AG04450 (cell line): ENCODE measurements at regions of chr5 and their contacts with region 1.

Region 1: GRCh38 chr5:169571355-169571754 is 12.2 kb upstream of the SPDL1 start:
- DNase-seq: no peak
- H3K4me3 ChIP-seq: no peak overlapping the region
- H3K27ac ChIP-seq: no peak overlapping the region
- H3K27me3 ChIP-seq: peaks cover 9% of the 10 kb centered on the region
- CTCF ChIP-seq: no peak

Region 2: GRCh38 chr5:169583424-169584204 is 12.3 kb after region 1 on chr5 and contains the start of gene SPDL1:
- CTCF ChIA-PET with region 1: interaction called, 10 read pairs
- POLR2A ChIA-PET with region 1: interaction called, 3 read pairs
- DNase-seq: peak; percentile 93
- H3K4me3 ChIP-seq: peak within 1 kb of the TSS; percentile 86
- H3K27ac ChIP-seq: peak within 1 kb of the TSS; percentile 77
- H3K27me3 ChIP-seq: no peaks in the 10 kb centered on the region
- CTCF ChIP-seq: no peak
- polyA plus RNA-seq, gene SPDL1: 14.0 and 22.7 TPM in 2 replicates